ENCODE measurements at regions of chr2 and their contacts with region 1.

Region 1: GRCh38 chr2:160516547-160517365 is 23.1 kb upstream of the RBMS1 start:
- DNase-seq: peak; percentile 59
- H3K4me3 Mint-ChIP-seq: peak overlapping the region; percentile 42
- H3K27ac Mint-ChIP-seq: peak overlapping the region; percentile 84
- H3K4me1 Mint-ChIP-seq: peaks cover 29% of the 10 kb centered on the region
- H3K27me3 Mint-ChIP-seq: no peaks in the 10 kb centered on the region

Region 2: DNA sequence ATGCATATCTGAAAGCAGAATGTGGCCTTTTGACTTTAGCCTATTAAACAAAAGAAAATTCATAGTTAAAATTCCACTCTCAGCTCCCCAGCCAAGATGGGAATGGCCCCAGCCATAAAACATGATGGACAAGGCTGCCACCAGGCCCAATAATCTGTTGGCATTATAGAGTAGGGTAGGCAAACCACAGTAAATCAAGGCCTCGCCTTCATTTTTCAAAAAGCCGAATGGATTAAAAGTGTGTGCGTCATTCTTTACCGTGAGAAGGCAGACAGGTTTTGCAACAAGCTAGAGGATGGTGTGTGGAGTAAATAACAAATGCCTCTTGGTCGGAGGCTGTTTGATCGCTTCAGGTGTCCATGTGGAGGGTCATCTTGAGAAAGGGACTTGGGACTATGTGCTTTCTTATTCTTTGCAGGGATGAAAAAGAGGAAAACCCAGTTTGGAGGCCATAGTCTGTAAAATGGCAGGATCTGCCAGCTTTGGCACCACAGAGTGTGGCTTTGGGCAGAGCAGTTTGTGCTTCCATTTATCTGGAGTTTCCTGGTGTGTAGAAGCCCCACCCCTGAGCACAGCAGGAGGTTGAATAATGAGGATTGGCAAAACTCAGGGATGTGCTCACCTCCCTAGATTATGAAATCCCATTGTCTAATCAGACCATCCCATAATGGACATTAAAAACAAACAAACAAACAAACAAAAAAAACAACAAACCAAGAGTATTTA is 259.6 kb before region 1 on chr2:
- intact Hi-C with region 1: no loop called
- DNase-seq: no peak
- H3K4me3 Mint-ChIP-seq: no peak overlapping the region
- H3K27ac Mint-ChIP-seq: no peak overlapping the region
- H3K4me1 Mint-ChIP-seq: no peaks in the 10 kb centered on the region
- H3K27me3 Mint-ChIP-seq: peaks cover 13% of the 10 kb centered on the region

Region 3: DNA sequence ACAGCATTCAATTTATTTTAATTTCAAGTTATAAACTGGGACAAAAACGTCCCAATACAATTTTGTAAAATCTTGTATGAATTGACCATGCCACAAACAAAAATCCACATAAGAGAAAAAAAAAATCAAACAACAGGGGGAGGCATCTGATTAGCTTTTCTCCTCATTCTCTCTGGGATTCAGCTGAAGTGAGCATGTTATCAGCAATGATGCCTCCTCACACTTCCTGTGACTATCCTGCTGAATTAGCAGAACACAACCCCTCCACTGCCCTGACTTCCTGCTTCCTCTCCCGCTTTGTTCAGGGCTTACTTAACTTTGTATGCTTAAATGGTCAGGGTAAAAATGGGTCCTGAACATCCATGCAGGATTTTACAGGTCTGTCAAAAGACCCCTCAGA is 184.4 kb before region 1 on chr2:
- intact Hi-C with region 1: loop called (anchors 5 kb)
- DNase-seq: peak; percentile 71
- H3K4me3 Mint-ChIP-seq: peak overlapping the region; percentile 33
- H3K27ac Mint-ChIP-seq: peak overlapping the region; percentile 66
- H3K4me1 Mint-ChIP-seq: peaks cover 77% of the 10 kb centered on the region
- H3K27me3 Mint-ChIP-seq: no peaks in the 10 kb centered on the region

Region 4: DNA sequence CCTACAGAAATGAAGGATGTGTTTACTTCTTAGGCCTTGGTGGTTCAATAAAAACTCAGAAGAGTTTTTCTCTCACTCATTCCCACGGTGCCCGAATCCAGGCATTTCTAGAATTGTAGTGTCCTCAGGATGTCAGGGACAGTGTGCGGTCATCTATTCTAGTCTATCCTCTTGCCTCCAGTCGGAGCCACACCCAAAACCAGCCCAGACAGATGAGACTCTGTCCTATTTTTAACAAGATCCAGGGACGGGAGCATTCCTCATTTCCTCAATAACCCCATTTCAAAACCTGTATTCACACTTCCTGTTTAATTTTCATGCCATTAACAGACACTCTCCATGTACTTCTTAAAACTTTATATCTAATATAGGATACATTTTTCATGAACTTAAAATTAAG is 11.5 kb before region 1 on chr2:
- intact Hi-C with region 1: loop called (anchors 1 kb)
- DNase-seq: peak; percentile 43
- H3K4me3 Mint-ChIP-seq: no peak overlapping the region
- H3K27ac Mint-ChIP-seq: no peak overlapping the region
- H3K4me1 Mint-ChIP-seq: peaks cover 12% of the 10 kb centered on the region
- H3K27me3 Mint-ChIP-seq: no peaks in the 10 kb centered on the region

Region 5: DNA sequence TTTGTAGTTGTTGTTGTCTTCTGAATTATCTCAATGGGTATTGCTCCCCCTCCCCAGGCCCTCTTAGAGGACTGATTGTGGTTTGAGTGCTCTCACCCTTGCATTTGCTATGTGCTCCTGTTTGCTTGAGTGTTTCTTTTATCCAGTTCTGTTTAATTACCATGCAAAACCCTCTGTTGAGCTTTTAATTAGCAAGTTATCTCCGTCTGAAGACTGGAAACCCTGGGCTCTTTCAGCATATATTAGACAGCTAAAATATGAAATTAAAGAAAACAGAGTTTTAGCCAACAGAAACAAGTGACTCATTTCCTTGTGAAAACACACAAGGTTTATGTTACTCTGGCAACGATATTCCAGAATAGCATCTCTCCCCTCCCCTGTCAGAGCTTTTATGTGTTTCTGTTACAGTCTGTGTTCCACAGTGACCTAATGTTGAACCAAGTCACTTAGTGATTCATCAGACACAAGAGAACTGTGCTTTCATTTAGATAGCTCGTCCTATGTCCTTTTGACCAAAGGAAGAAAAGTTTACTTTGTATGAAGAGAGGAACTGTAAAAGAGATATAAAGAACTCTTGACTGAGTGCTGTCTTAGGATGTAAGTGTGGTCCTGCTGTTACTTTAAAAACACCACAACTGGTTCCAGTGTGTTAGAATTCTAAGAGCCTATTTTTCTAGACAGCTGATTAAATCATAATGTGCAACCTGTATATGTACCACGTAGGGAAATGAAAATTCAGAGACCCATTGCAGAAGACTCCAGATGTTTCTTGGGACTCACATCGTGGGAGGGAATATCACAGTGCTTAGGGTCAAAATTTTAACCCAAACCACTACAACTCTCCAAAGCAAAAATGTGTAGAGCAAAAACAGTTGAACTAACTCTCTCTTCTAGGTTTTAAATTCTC is 149.7 kb after region 1 on chr2:
- intact Hi-C with region 1: loop called (anchors 5 kb)
- DNase-seq: peak; percentile 67
- H3K4me3 Mint-ChIP-seq: peak overlapping the region; percentile 53
- H3K27ac Mint-ChIP-seq: peak overlapping the region; percentile 45
- H3K4me1 Mint-ChIP-seq: peaks cover 20% of the 10 kb centered on the region
- H3K27me3 Mint-ChIP-seq: no peaks in the 10 kb centered on the region

Measured in activated CD4-positive, alpha-beta T cell treated with anti-CD3 and anti-CD28 coated beads, Interleukin-2, amount 10 ng/mL, durations not matched to agents 24 days and 14 days (primary cell).